ENCODE measurements at regions of chr2 and their contacts with region 1.

Region 1: DNA sequence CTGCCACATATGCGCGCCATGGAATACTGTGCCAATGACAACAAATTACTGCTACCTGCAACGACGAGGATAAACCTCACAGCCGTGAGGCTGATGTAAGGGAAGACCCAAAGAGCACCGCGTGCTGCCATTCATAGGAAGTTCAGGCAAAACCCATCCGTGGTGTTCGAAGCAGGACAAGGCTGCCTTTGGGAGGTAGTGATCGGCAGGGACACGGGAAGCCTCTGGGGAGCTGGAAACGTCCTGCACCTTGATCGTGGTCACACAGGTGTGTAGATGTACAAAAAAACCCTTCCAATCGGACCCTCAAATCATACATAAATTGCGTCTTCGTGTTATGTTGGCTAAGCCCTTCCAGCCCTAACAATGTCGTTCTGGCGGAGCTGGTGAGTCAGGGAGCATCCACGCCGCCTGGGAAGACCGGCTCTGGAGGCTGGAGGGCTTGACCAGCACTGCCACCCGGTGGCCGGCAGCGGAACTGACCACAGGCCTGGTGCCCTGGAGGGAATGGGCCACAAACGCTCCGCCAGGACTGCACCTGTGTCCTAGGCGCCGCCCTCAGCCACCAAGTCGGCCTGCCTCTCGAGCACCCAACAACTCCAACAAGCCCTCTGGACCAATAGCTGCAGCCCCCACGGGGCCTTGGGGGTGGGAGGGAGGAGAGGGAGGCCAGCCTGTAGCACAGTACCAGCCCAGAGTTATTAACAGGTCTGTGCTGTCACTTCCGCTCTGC is 4.1 kb upstream of the NEURL3 start:
- DNase-seq: peak; percentile 67
- H3K4me3 Mint-ChIP-seq: no peak overlapping the region
- H3K27ac Mint-ChIP-seq: no peak overlapping the region
- H3K4me1 Mint-ChIP-seq: peaks cover 26% of the 10 kb centered on the region
- H3K27me3 Mint-ChIP-seq: peaks cover 16% of the 10 kb centered on the region

Region 2: GRCh38 chr2:96407041-96407918 is 102.0 kb before region 1 on chr2:
- CTCF ChIA-PET with region 1: interaction called, 134 read pairs
- POLR2A ChIA-PET with region 1: interaction called, 5 read pairs
- DNase-seq: peak; percentile 83
- H3K4me3 Mint-ChIP-seq: no peak overlapping the region
- H3K27ac Mint-ChIP-seq: peak overlapping the region; percentile 72
- H3K4me1 Mint-ChIP-seq: peaks cover 22% of the 10 kb centered on the region
- H3K27me3 Mint-ChIP-seq: no peaks in the 10 kb centered on the region

Region 3: DNA sequence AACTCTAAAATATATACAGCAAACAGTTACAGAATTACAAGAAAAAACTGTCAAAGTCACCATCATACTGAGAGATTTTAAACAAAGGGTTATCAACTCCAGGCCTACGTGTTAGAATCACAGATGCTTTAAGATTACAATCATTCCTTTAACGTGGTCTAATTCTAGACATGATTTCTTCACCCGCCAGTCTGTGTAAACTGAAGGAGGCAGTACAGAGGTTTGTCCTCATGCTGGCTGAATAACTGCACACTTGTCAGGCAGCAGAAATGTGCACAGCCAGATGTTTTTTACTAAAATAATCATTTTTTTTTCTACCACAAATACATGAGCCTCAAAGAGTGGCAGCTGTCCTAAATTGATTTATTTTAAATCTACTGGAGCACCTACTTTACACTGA is 11.4 kb after region 1 on chr2:
- CTCF ChIA-PET with region 1: interaction called, 18 read pairs
- POLR2A ChIA-PET with region 1: no interaction called
- DNase-seq: no peak
- H3K4me3 Mint-ChIP-seq: no peak overlapping the region
- H3K27ac Mint-ChIP-seq: no peak overlapping the region
- H3K4me1 Mint-ChIP-seq: peaks cover 47% of the 10 kb centered on the region
- H3K27me3 Mint-ChIP-seq: peaks cover 16% of the 10 kb centered on the region

Region 4: GRCh38 chr2:96788442-96789244 is 279.4 kb after region 1 on chr2:
- CTCF ChIA-PET with region 1: no interaction called
- POLR2A ChIA-PET with region 1: no interaction called
- DNase-seq: no peak
- H3K4me3 Mint-ChIP-seq: no peak overlapping the region
- H3K27ac Mint-ChIP-seq: no peak overlapping the region
- H3K4me1 Mint-ChIP-seq: peaks cover 3% of the 10 kb centered on the region
- H3K27me3 Mint-ChIP-seq: no peaks in the 10 kb centered on the region